Common myeloid progenitor, CD34-positive (primary cell): ENCODE measurements at regions of chr19 and their contacts with region 1.

Region 1: DNA sequence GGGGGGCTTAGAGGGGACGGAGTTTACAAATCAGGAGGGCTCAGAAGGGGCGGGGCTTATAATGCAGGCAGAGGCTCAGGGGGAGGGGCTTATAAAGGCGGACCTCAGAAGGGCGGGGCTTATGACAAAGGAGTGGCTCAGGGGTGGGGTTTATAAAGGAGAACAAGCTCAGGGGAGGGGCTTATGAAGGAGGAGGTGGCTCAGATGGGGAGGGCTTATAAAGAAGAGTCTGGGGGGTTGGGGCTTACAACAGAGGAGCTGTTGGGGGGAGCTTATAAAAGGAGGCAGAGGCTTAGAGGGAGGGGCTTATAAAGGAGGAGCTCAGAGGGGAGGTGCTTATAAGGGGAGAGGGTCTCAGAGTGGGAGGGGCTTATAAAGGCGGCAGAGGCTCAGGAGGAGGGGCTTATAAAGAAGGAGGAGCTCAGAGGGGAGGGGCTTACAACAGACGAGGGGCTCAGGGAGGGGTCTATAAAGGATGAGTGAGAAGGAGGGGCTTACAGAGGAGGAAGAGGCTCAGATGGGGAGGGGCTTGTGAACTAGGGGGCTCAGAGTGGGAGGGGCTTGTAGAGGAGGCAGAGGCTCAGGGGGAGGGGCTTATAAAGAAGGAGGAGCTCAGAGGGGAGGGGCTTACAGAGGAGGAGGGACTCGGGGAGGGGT is 1.0 kb downstream of the SMIM24 start:
- DNase-seq: peak; percentile 96 to 98 (median 96)
- H3K4me3 ChIP-seq: peak overlapping the region in 6 of 7 experiments; percentile 45 to 80 (median 68)
- H3K27ac ChIP-seq: peak overlapping the region in 1 of 2 experiments; percentile 73
- H3K4me1 ChIP-seq: peaks cover 0 to 28% (median 21%) of the 10 kb centered on the region in 4 experiments
- H3K27me3 ChIP-seq: no peaks in the 10 kb centered on the region

Region 2: GRCh38 chr19:3494051-3494450 is 14.7 kb after region 1 on chr19:
- CTCF ChIA-PET with region 1: interaction called, 38 read pairs
- POLR2A ChIA-PET with region 1: interaction called, 4 read pairs
- DNase-seq: no peak
- H3K4me3 ChIP-seq: no peak overlapping the region
- H3K27ac ChIP-seq: no peak overlapping the region
- H3K4me1 ChIP-seq: peaks cover 0 to under 1% (median 0%) of the 10 kb centered on the region in 4 experiments
- H3K27me3 ChIP-seq: no peaks in the 10 kb centered on the region

Region 3: DNA sequence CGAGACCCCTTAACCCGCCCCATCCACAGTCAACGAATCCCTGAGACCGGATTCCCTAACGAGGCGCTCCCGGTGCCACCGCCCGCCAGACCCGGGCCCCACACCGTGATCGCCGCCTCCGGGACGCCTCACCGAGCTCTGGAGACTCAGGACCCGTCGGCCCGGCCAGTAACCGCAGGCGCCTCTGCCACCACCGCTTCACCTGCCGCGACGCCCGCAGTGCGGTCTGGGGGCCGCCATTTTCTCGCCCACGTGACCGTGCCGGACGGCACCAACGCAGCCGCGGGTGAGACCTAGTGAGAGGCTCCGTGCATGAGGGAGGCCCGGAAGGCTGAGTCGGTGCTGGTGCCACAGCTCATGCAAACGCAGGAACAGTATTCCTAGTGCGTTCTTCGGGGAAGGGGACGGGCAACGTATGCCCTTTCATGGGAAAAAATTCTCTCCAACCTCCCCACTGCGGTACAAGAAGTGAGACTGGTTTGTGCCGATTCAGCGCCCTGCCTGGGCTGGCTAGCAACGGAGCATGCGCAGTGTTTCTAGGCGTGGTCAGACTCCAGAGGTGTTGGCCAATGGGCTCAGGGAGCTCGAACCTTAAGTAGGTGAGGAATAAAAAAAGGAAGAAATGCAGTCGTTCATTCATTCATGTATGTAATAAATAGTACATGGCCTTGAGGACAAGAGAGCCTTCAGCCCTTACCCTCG is 21.3 kb after region 1 on chr19 and contains the start of gene DOHH:
- CTCF ChIA-PET with region 1: interaction called, 38 read pairs
- POLR2A ChIA-PET with region 1: interaction called, 4 read pairs
- DNase-seq: peak; percentile 97 to 99 (median 97)
- H3K4me3 ChIP-seq: peak within 1 kb of the TSS; percentile 80 to 99 (median 90)
- H3K27ac ChIP-seq: peak within 1 kb of the TSS; percentile 98 to 99
- H3K4me1 ChIP-seq: peaks cover 0 to 22% (median 20%) of the 10 kb centered on the region in 4 experiments
- H3K27me3 ChIP-seq: no peaks in the 10 kb centered on the region